ENCODE measurements at regions of chr9 and their contacts with region 1.

Region 1: DNA sequence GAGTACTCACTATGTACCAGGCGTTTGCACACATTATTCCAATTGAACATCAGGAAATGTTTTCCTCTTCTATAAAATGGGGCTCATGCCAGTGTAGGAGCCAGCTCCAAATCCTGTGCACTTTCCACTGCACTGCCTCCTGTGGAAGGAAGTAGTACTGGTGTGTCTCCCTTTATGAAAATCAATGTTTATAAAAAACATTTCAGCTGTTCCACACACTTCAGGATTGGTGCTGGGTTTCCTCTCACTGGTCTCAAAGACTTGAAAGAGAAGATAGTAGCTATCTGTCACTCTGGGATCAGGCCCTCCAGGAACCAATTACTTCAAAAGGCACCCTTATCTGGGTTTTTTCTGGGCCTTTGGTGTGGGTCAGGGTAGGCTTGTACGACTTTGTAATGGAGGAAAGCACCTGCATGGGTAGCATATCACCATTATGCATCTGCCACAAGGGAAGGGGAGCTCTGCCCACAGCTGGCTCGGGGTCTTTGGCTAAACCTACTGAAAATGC is 32.5 kb downstream of the RAB14 start:
- DNase-seq: peak in 5 of 9 experiments; percentile 16 to 69 (median 39)
- ATAC-seq: peak; percentile 89
- H3K4me3 ChIP-seq: no peak overlapping the region
- H3K4me3 Mint-ChIP-seq: no peak overlapping the region
- H3K27ac ChIP-seq: peak overlapping the region; percentile 16 to 49
- H3K27ac Mint-ChIP-seq: peak overlapping the region; percentile 83
- H3K4me1 ChIP-seq: peaks cover 20% of the 10 kb centered on the region
- H3K4me1 Mint-ChIP-seq: peaks cover 23% of the 10 kb centered on the region
- H3K27me3 ChIP-seq: no peaks in the 10 kb centered on the region
- H3K27me3 Mint-ChIP-seq: no peaks in the 10 kb centered on the region
- CTCF ChIP-seq: peak; percentile 57

Region 2: GRCh38 chr9:120465685-120466407 is 703.3 kb before region 1 on chr9:
- CTCF ChIA-PET with region 1: no interaction called
- POLR2A ChIA-PET with region 1: no interaction called
- intact Hi-C with region 1: loop called in 1 of 2 experiments (anchors 5 kb)
- DNase-seq: no peak
- ATAC-seq: no peak
- H3K4me3 ChIP-seq: no peak overlapping the region
- H3K4me3 Mint-ChIP-seq: no peak overlapping the region
- H3K27ac ChIP-seq: no peak overlapping the region
- H3K27ac Mint-ChIP-seq: no peak overlapping the region
- H3K4me1 ChIP-seq: no peaks in the 10 kb centered on the region
- H3K4me1 Mint-ChIP-seq: no peaks in the 10 kb centered on the region
- H3K27me3 ChIP-seq: no peaks in the 10 kb centered on the region
- H3K27me3 Mint-ChIP-seq: no peaks in the 10 kb centered on the region
- CTCF ChIP-seq: no peak

Region 3: DNA sequence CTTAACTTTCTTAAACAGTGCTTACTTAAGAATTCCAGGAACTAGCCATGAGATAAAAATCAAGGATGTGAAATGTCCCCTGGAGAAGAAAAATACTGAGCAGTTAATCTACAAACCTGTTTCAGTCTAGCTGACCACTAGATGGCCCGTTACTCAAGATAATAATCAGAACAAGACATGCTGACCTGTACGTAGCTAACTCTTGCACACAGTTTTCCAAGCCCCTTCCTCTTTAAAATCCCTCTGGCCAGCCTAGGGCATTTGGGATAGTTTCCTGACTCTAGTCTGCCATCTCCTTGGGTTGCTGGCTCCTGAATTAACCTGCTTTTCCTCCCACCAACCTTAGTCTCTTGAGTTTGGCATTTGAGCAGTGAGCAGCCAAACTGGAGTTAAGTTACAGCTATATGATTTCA is 183.3 kb before region 1 on chr9:
- CTCF ChIA-PET with region 1: no interaction called
- POLR2A ChIA-PET with region 1: no interaction called
- intact Hi-C with region 1: loop called in 1 of 2 experiments (anchors 10 kb)
- DNase-seq: peak in 1 of 9 experiments; percentile 12
- ATAC-seq: no peak
- H3K4me3 ChIP-seq: no peak overlapping the region
- H3K4me3 Mint-ChIP-seq: no peak overlapping the region
- H3K27ac ChIP-seq: no peak overlapping the region
- H3K27ac Mint-ChIP-seq: no peak overlapping the region
- H3K4me1 ChIP-seq: no peaks in the 10 kb centered on the region
- H3K4me1 Mint-ChIP-seq: peaks cover 5% of the 10 kb centered on the region
- H3K27me3 ChIP-seq: no peaks in the 10 kb centered on the region
- H3K27me3 Mint-ChIP-seq: no peaks in the 10 kb centered on the region
- CTCF ChIP-seq: no peak

Region 4: GRCh38 chr9:121156263-121156731 is 12.9 kb before region 1 on chr9:
- CTCF ChIA-PET with region 1: interaction called, 12 read pairs
- POLR2A ChIA-PET with region 1: interaction called, 6 read pairs
- intact Hi-C with region 1: no loop called
- DNase-seq: peak in 3 of 9 experiments; percentile 20 to 65 (median 38)
- ATAC-seq: peak; percentile 80
- H3K4me3 ChIP-seq: no peak overlapping the region
- H3K4me3 Mint-ChIP-seq: no peak overlapping the region
- H3K27ac ChIP-seq: peak overlapping the region in 1 of 2 experiments; percentile 54
- H3K27ac Mint-ChIP-seq: peak overlapping the region; percentile 85
- H3K4me1 ChIP-seq: peaks cover 9% of the 10 kb centered on the region
- H3K4me1 Mint-ChIP-seq: peaks cover 36% of the 10 kb centered on the region
- H3K27me3 ChIP-seq: no peaks in the 10 kb centered on the region
- H3K27me3 Mint-ChIP-seq: no peaks in the 10 kb centered on the region
- CTCF ChIP-seq: no peak

Region 5: GRCh38 chr9:121201738-121202533 is 32.8 kb after region 1 on chr9 and contains the start of gene RAB14:
- CTCF ChIA-PET with region 1: no interaction called
- POLR2A ChIA-PET with region 1: interaction called, 4 read pairs
- intact Hi-C with region 1: loop called in 1 of 2 experiments (anchors 5 kb)
- DNase-seq: peak; percentile 100
- ATAC-seq: peak; percentile 90
- H3K4me3 ChIP-seq: peak within 1 kb of the TSS; percentile 77 to 79
- H3K4me3 Mint-ChIP-seq: peak within 1 kb of the TSS; percentile 96
- H3K27ac ChIP-seq: peak within 1 kb of the TSS; percentile 79 to 82
- H3K27ac Mint-ChIP-seq: peak within 1 kb of the TSS; percentile 97
- H3K4me1 ChIP-seq: peaks cover 41% of the 10 kb centered on the region
- H3K4me1 Mint-ChIP-seq: peaks cover 53% of the 10 kb centered on the region
- H3K27me3 ChIP-seq: no peaks in the 10 kb centered on the region
- H3K27me3 Mint-ChIP-seq: no peaks in the 10 kb centered on the region
- CTCF ChIP-seq: no peak
- total RNA-seq, gene RAB14: 58.8 to 60.4 TPM

Measured in CD8-positive, alpha-beta T cell (primary cell).